ENCODE measurements at regions of chr9 and their contacts with region 1.

Region 1: DNA sequence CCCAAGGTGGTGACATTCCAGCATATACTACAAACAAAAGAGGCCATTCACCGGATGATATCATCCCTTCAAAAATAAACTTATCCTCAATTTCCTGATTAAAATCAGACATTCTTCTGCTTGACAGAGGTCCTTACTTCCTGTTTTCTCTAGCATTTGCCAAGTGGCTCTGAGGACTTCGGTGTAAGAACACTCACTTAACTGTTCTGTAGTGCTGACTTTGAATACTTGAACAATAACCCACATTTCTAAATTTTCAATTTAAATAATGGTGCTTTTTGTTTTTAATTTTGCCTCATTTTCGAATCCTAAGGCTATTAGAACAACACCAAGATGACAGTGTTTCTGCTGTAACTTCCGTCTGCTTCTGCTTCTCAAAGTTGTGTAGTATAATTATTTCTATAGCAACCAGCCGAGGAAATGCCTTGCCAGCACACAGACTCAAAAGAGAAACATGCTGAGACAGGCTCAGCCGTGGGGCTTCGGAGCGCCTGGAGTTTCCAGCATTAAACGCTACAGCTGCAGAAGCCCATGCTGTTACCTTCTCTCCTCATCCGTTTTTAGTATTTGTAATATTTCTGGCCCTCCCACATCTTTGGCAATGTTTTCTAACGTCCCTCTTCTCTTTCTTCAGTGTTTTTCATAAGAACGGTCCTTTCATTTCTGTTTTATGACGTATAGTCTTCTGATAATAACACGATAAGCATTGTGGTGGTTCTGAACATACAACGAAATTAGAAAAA is 19.5 kb upstream of the ANXA1 start:
- DNase-seq: peak; percentile 93
- H3K4me3 Mint-ChIP-seq: peak overlapping the region; percentile 82
- H3K27ac Mint-ChIP-seq: peak overlapping the region; percentile 91
- H3K4me1 Mint-ChIP-seq: peaks cover 40% of the 10 kb centered on the region
- H3K27me3 Mint-ChIP-seq: no peaks in the 10 kb centered on the region

Region 2: DNA sequence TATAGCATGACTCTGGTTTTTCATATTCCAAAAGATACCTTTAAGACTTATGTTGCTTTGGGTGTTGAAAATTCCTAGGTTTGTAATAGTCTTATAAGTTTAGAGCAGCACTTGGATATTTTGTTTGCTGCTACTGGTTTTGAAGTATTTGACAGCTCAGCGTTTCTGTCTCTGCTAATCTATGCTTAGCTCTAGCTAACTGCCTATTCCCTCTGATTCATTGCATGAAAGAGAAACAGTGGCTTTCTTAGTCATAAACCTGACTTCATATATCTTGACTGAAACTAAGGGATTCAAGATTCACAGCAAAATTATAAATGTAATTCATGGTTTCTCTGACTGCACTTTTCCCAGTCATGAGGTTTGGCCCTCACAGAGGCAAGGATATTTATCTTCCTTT is 16.2 kb before region 1 on chr9:
- intact Hi-C with region 1: loop called (anchors 1 kb)
- DNase-seq: no peak
- H3K4me3 Mint-ChIP-seq: no peak overlapping the region
- H3K27ac Mint-ChIP-seq: no peak overlapping the region
- H3K4me1 Mint-ChIP-seq: peaks cover 28% of the 10 kb centered on the region
- H3K27me3 Mint-ChIP-seq: peaks cover 2% of the 10 kb centered on the region

Region 3: GRCh38 chr9:73143606-73144328 is 11.6 kb after region 1 on chr9:
- intact Hi-C with region 1: loop called (anchors 1 kb)
- DNase-seq: no peak
- H3K4me3 Mint-ChIP-seq: no peak overlapping the region
- H3K27ac Mint-ChIP-seq: no peak overlapping the region
- H3K4me1 Mint-ChIP-seq: peaks cover 31% of the 10 kb centered on the region
- H3K27me3 Mint-ChIP-seq: no peaks in the 10 kb centered on the region

Measured in activated CD4-positive, alpha-beta T cell treated with anti-CD3 and anti-CD28 coated beads, Interleukin-2, amount 10 ng/mL, durations not matched to agents 24 days and 14 days (primary cell).